ENCODE measurements at regions of chr1 and their contacts with region 1.

Region 1: GRCh38 chr1:15128520-15129313 is 24.8 kb upstream of the TMEM51 start:
- DNase-seq: peak; percentile 82
- ATAC-seq: peak; percentile 84

Region 2: GRCh38 chr1:15106608-15107007 is 22.1 kb before region 1 on chr1:
- intact Hi-C with region 1: no loop called
- DNase-seq: peak; percentile 79
- ATAC-seq: no peak

Region 3: GRCh38 chr1:15272009-15272788 is 143.5 kb after region 1 on chr1:
- intact Hi-C with region 1: loop called (anchors 2 kb)
- DNase-seq: peak; percentile 72
- ATAC-seq: peak; percentile 74

Region 4: GRCh38 chr1:15304701-15305467 is 176.2 kb after region 1 on chr1:
- intact Hi-C with region 1: loop called (anchors 1 kb)
- DNase-seq: peak; percentile 81
- ATAC-seq: no peak